ENCODE measurements at regions of chr16 and their contacts with region 1.

Region 1: DNA sequence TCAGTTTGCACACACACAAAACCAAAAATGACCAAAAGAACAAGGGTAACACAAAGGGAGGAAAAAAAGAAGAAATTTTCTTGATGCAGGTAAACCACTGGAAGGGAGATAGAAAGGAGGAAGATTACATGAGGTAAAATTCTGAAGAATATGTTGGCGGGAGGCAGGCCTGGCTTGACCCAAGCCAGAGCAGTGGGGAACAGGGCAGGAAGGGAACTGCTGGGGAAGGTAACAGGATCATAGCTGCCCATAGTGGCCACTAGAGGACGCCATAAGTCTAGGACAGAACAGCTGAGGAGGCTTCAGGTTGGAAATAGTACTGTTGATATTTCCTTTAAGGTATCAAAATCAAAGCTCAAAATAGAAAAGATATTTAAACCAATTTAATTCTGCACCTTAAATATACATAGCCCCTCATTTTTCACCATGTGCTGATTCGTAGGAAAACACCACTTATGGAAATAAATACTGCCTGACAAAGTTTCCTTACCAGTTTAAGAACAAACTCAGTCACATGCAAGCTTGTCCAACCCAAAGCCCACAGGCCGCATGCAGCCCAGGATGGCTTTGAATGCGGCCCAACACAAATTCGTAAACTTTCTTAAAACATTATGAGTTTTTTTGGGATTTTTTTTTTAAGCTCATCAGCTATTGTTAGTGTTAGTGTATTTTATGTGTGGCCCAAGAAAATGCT is 15.5 kb downstream of the VPS35 start:
- DNase-seq: peak in 1 of 2 donors; percentile 50
- ATAC-seq: peak; percentile 70 to 96
- H3K4me3 ChIP-seq: no peak overlapping the region
- H3K27ac ChIP-seq: no peak overlapping the region
- H3K4me1 ChIP-seq: no peaks in the 10 kb centered on the region
- H3K27me3 ChIP-seq: no peaks in the 10 kb centered on the region
- CTCF ChIP-seq: peak; percentile 75 to 92 (median 85)
- POLR2A ChIP-seq: no peak

Region 2: DNA sequence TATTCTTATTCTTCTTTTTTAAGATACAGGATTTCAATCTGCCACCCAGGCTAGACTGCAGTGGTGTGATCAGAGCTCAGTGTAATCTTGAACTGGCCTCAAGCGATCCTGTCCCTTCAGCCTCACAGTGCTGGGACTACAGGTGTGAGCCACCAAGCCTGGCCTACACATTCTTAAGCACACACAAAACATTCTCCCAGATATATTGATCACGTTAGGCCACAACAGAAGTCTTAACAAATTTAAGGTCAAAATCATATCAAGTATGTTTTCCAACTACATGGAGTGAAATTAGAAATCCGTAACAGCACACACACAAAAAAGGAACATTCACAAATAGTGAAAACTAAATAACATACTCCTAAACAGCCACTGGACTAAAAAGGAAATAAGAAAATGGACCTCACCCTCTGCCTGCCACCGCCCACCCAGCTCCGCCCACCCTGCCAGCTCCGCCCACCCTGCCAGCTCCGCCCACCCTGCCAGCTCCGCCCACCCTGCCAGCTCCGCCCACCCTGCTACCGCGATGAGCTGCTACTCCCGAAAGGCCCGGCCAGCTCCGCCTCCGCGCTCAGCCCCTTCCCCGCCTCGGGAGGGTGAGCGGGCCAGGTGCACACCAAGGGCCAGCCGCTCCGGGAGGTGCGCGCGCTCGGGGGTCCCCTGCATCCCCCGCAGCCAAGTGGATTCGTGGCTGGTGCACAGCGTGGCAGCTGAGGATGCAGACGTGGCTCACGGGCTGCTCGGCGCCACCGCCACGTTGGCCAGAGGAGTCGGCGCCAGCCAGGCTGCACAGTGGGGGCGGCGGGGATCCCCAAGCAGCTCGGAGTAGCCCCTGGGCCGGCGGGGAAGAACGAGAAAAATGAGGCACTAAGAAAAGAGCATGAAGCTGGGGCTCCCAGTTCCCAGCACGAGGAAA is 116.3 kb after region 1 on chr16:
- in situ Hi-C with region 1: loop called in 2 of 4 experiments (anchors 10 kb)
- intact Hi-C with region 1: no loop called
- DNase-seq: peak; percentile 59 to 76
- ATAC-seq: peak; percentile 86 to 94
- H3K4me3 ChIP-seq: peak overlapping the region; percentile 68 to 84 (median 72)
- H3K27ac ChIP-seq: peak overlapping the region; percentile 40 to 68 (median 59)
- H3K4me1 ChIP-seq: no peaks in the 10 kb centered on the region
- H3K27me3 ChIP-seq: no peaks in the 10 kb centered on the region
- CTCF ChIP-seq: no peak
- POLR2A ChIP-seq: no peak

Region 3: GRCh38 chr16:46801428-46802049 is 128.1 kb after region 1 on chr16:
- in situ Hi-C with region 1: loop called in 3 of 4 experiments (anchors 5 to 10 kb)
- intact Hi-C with region 1: loop called (anchors 1 kb)
- DNase-seq: no peak
- ATAC-seq: peak in 1 of 2 donors; percentile 68
- H3K4me3 ChIP-seq: no peak overlapping the region
- H3K27ac ChIP-seq: no peak overlapping the region
- H3K4me1 ChIP-seq: peaks cover 0 to 3% of the 10 kb centered on the region in 2 donors
- H3K27me3 ChIP-seq: no peaks in the 10 kb centered on the region
- CTCF ChIP-seq: peak in 4 of 5 experiments; percentile 37 to 49 (median 48)
- POLR2A ChIP-seq: no peak

Region 4: GRCh38 chr16:46808997-46809396 is 135.5 kb after region 1 on chr16:
- in situ Hi-C with region 1: loop called in 1 of 4 experiments (anchors 5 kb)
- intact Hi-C with region 1: no loop called
- DNase-seq: no peak
- ATAC-seq: no peak
- H3K4me3 ChIP-seq: no peak overlapping the region
- H3K27ac ChIP-seq: no peak overlapping the region
- H3K4me1 ChIP-seq: peaks cover 18 to 23% of the 10 kb centered on the region in 2 donors
- H3K27me3 ChIP-seq: no peaks in the 10 kb centered on the region
- CTCF ChIP-seq: no peak
- POLR2A ChIP-seq: no peak

Region 5: DNA sequence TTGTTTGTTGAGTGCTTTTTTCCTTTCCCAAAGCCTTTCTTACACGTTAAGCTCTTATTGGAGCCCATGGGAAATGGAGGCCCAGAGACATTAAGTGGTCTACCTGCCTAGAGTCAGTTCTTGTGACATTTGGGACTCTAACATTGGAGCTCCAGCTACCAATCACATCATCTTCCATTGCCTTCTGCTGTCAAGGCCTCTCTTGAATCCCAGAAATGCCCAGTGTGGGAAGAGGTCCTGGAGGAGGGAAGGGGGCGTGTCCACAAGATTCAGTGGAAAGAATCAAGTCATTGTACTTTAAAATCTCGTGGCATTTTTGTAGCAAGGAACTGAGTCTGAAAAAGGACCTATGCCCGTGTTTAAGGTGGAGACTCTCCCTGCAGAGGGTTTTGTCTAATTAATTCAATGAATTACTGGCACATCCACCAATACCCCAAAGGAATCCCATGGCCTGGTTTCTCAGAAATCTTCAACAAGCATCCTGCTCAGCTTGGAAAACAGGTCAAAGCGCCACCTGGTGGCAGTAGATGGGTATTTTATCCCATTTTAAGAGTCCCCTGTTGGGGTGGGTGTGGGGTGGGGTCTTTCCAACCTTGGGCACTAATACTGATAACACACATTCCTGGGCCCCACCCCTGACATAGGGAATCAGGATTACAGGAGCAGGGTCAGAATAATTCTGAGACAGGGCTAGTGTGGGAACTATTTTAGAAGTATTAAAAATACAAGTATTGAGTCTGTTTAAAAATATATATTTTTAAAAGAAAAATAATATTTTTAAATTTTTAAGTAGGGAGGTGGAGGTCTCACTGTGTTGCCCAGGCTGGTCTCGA is 235.3 kb after region 1 on chr16:
- in situ Hi-C with region 1: loop called in 2 of 4 experiments (anchors 10 to 25 kb)
- intact Hi-C with region 1: loop called (anchors 10 kb)
- DNase-seq: no peak
- ATAC-seq: peak; percentile 53 to 72
- H3K4me3 ChIP-seq: no peak overlapping the region
- H3K27ac ChIP-seq: peak overlapping the region in 2 of 4 donors; percentile 12 to 32
- H3K4me1 ChIP-seq: peaks cover 15 to 17% of the 10 kb centered on the region in 2 donors
- H3K27me3 ChIP-seq: no peaks in the 10 kb centered on the region
- CTCF ChIP-seq: peak; percentile 54 to 90 (median 83)
- POLR2A ChIP-seq: no peak

Measured in gastrocnemius medialis (tissue), 4 donors.